Aorta (tissue), 5 donors: ENCODE measurements at regions of chr2 and their contacts with region 1.

Region 1: GRCh38 chr2:238287737-238288649 is at the start of gene PER2:
- DNase-seq: peak; percentile 78 to 90
- ATAC-seq: peak; percentile 58
- H3K4me3 ChIP-seq: peak within 1 kb of the TSS; percentile 58 to 69
- H3K27ac ChIP-seq: peak within 1 kb of the TSS; percentile 88
- H3K4me1 ChIP-seq: no peaks in the 10 kb centered on the region
- H3K27me3 ChIP-seq: no peaks in the 10 kb centered on the region
- total RNA-seq, gene PER2: 22.0 to 25.1 TPM

Region 2: DNA sequence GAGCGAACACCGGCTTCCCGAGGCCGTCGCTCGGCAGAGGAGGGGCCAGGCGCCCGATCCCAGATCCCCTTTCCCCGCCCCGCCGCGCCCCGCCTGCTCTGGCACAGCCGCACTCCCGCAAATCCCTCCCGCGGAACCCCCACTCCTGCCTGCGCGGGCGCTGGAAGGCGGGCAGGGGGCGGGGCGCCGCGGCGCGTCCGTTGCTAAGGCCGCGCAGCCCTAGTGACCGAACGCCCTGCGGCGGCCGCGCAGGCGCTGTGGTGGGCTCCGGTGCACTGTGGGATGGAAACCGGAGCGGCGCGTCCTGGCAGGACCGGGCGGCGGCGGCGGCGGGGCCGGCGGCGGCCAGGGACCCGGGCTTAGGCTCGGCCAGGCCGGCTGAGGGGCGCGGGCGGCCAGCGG is 32.3 kb after region 1 on chr2 and contains the start of gene TRAF3IP1:
- intact Hi-C with region 1: loop called in 1 of 2 experiments (anchors 2 kb)
- DNase-seq: peak; percentile 95 to 98
- ATAC-seq: peak; percentile 98
- H3K4me3 ChIP-seq: peak within 1 kb of the TSS; percentile 82 to 96
- H3K27ac ChIP-seq: peak within 1 kb of the TSS in 1 of 2 donors; percentile 42
- H3K4me1 ChIP-seq: no peaks in the 10 kb centered on the region
- H3K27me3 ChIP-seq: no peaks in the 10 kb centered on the region
- total RNA-seq, gene TRAF3IP1: 21.0 to 21.5 TPM